B cell (primary cell): ENCODE measurements at regions of chr1 and their contacts with region 1.

Region 1: DNA sequence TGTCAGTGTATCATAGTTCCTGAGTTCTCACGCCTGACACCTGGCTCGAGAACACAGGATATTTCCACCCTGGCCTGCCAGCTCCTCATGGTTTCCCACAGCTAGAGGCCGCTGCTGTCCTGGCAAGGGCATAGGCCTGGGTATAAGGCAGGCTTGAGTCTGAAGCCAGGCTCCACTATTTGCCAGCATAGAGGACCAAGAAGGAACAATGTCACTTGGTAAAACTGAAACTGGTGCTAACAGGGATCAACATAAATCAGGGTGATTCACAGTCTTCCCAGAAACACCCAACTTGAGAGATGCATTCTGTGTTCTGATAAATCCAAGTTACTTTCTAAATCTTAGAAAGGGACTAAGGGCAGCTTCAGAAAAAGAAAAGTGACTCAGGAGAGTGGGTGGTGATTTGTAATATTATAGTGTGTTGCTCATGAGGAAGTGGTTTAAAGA is 6.9 kb upstream of the S100A2 start:
- DNase-seq: peak; percentile 76
- ATAC-seq: peak; percentile 89
- H3K4me3 ChIP-seq: no peak overlapping the region
- H3K4me3 Mint-ChIP-seq: no peak overlapping the region
- H3K27ac ChIP-seq: no peak overlapping the region
- H3K27ac Mint-ChIP-seq: peak overlapping the region; percentile 56
- H3K4me1 ChIP-seq: peaks cover 4 to 22% of the 10 kb centered on the region in 2 donors
- H3K4me1 Mint-ChIP-seq: peaks cover 25% of the 10 kb centered on the region
- H3K27me3 ChIP-seq: peaks cover 0 to 2% (median under 1%) of the 10 kb centered on the region in 4 experiments
- H3K27me3 Mint-ChIP-seq: peaks cover 8% of the 10 kb centered on the region
- CTCF ChIP-seq: peak; percentile 80

Region 2: DNA sequence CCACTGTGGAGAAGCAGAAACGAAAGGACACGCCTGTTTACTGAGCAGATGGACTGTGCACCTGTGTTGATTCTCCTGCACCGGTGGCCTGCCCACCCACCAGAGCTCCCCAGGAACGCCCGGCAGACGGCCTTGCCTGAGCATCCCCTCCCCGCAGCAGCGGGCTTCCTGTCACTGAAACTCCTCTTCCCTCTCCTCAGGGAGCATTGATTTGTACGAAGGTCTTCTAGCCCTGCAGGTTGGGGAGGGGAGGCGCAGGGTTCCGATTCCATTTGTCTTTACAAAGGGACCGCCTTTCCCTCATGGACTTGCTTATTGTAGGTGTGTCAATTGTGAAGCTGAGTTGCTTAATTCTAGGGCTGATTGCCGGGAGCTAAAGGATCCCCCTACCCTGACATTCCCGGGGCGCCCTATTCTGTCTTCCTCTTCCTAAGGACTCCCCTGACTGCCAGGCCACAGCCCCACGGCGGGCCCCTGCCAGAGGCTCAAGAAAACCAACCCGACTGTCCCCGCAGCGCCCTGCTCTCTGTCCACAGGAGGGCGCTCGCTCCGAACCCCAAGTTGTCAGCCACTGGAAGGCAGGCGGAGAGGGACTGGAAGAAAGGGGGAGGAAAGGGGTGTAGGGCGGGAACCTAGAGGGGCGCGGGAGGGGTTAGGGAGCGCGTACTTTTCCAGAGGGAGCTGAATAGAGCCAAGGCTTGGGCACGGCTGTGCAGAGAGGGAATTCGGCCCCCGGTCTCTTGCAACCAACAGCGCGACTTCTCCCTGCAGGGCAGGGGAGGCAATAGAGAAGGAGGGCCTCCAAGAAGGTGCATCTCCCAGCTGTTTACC is 39.6 kb before region 1 on chr1:
- CTCF ChIA-PET with region 1: interaction called, 189 read pairs
- POLR2A ChIA-PET with region 1: interaction called, 7 read pairs
- intact Hi-C with region 1: loop called (anchors 1 kb)
- DNase-seq: peak; percentile 73
- ATAC-seq: peak; percentile 13
- H3K4me3 ChIP-seq: no peak overlapping the region
- H3K4me3 Mint-ChIP-seq: peak overlapping the region; percentile 47
- H3K27ac ChIP-seq: peak overlapping the region; percentile 2 to 26
- H3K27ac Mint-ChIP-seq: peak overlapping the region; percentile 50
- H3K4me1 ChIP-seq: peaks cover 38 to 48% of the 10 kb centered on the region in 2 donors
- H3K4me1 Mint-ChIP-seq: peaks cover 41% of the 10 kb centered on the region
- H3K27me3 ChIP-seq: no peaks in the 10 kb centered on the region
- H3K27me3 Mint-ChIP-seq: no peaks in the 10 kb centered on the region
- CTCF ChIP-seq: peak; percentile 71

Region 3: DNA sequence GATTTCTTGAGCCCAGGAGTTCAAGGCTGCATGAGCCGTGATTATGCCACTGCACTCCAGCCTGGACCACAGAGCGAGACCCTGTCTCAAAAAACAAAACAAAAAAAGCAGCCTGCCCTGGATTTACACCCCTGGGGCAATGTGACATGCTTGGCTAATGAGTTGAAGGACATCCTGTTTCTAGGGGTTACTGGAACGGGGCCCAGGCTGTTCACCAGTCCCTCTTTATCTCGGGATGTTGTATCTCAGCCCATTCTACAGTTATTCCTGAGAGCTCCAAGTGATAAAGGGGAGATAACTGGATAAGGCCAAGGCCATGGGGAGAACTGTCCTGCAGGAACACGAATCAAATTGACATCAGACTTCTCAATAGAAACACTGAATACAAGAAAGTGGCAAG is 14.7 kb after region 1 on chr1:
- CTCF ChIA-PET with region 1: interaction called, 14 read pairs
- POLR2A ChIA-PET with region 1: interaction called, 4 read pairs
- intact Hi-C with region 1: no loop called
- DNase-seq: no peak
- ATAC-seq: no peak
- H3K4me3 ChIP-seq: no peak overlapping the region
- H3K4me3 Mint-ChIP-seq: no peak overlapping the region
- H3K27ac ChIP-seq: no peak overlapping the region
- H3K27ac Mint-ChIP-seq: no peak overlapping the region
- H3K4me1 ChIP-seq: no peaks in the 10 kb centered on the region
- H3K4me1 Mint-ChIP-seq: no peaks in the 10 kb centered on the region
- H3K27me3 ChIP-seq: no peaks in the 10 kb centered on the region
- H3K27me3 Mint-ChIP-seq: peaks cover 10% of the 10 kb centered on the region
- CTCF ChIP-seq: no peak

Region 4: DNA sequence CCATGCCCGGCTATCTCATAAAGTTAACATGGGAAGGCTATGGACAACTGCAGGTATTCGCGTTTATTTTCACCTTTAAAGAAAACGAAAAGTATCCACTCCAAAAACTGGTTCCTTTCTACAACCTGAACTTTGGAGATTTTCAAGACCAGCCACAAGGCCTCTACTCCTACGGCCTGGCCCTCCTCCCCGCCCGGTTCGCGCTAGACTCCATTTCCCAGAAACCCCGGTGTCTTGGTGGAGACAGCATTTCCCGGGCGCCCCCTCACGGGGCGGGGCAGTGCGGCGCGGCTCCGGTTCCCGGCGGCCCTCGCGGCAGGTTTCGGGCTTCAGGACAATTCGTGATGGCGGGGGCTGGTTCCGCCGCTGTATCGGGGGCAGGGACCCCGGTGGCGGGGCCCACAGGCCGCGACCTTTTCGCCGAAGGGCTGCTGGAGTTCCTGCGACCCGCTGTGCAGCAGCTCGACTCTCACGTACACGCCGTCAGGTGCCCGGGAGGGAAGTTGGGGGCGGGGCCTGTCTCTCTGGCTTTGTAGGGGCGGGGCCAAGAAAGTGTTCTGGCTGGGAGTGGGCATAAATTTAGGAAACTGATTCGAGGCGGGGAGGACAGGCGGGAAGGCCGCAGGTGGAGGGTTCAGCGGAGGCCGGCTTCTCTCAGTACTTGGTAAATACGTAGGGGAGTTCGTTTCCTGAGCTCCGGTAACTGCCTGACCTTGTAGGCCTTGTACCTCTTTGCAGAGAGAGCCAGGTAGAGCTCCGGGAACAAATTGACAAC is 86.0 kb after region 1 on chr1 and contains the start of gene SNAPIN:
- CTCF ChIA-PET with region 1: interaction called, 9 read pairs
- POLR2A ChIA-PET with region 1: no interaction called
- intact Hi-C with region 1: loop called (anchors 1 kb)
- DNase-seq: peak; percentile 93
- ATAC-seq: peak; percentile 99
- H3K4me3 ChIP-seq: peak within 1 kb of the TSS; percentile 77 to 87 (median 82)
- H3K4me3 Mint-ChIP-seq: peak within 1 kb of the TSS; percentile 96
- H3K27ac ChIP-seq: peak within 1 kb of the TSS; percentile 68 to 83
- H3K27ac Mint-ChIP-seq: peak within 1 kb of the TSS; percentile 91
- H3K4me1 ChIP-seq: peaks cover 5 to 15% of the 10 kb centered on the region in 2 donors
- H3K4me1 Mint-ChIP-seq: peaks cover 12% of the 10 kb centered on the region
- H3K27me3 ChIP-seq: no peaks in the 10 kb centered on the region
- H3K27me3 Mint-ChIP-seq: no peaks in the 10 kb centered on the region
- CTCF ChIP-seq: no peak
- total RNA-seq, gene SNAPIN: 37.6 and 39.4 TPM in 2 replicates

Region 5: DNA sequence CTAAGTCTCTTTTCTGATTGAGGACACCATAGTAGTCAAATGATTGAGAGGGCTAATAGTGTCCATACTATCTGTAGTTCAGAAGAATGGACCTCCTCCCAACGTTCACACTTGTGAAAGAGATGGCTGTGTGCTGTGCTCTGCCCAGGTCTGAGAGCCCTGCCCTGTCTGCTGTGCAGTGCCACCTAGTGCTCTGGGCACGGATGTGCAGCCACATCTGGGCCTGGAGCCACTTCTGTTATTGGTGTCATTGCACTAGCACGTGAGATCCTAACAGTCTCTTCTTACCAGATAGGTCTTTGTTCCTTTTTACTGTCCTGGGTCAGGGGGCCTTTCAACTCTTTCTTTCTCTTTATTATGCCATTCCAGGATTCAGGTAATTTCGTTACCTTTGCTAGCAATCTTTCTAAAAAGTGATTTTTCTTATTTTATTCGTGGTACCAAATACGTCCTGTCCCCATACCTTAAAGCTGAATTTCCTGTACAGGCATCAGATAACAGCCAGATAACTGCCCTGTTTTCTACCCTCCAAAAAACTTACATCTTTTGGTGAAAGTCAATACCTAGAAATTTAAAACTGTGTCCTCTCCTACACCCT is 176.9 kb after region 1 on chr1:
- CTCF ChIA-PET with region 1: interaction called, 54 read pairs
- POLR2A ChIA-PET with region 1: interaction called, 9 read pairs
- intact Hi-C with region 1: loop called (anchors 1 kb)
- DNase-seq: peak; percentile 86
- ATAC-seq: peak; percentile 100
- H3K4me3 ChIP-seq: no peak overlapping the region
- H3K4me3 Mint-ChIP-seq: no peak overlapping the region
- H3K27ac ChIP-seq: no peak overlapping the region
- H3K27ac Mint-ChIP-seq: no peak overlapping the region
- H3K4me1 ChIP-seq: peaks cover 0 to 5% of the 10 kb centered on the region in 2 donors
- H3K4me1 Mint-ChIP-seq: peaks cover 6% of the 10 kb centered on the region
- H3K27me3 ChIP-seq: no peaks in the 10 kb centered on the region
- H3K27me3 Mint-ChIP-seq: no peaks in the 10 kb centered on the region
- CTCF ChIP-seq: peak; percentile 91